Posterior vena cava (tissue), 2 donors: ENCODE measurements at regions of chr12 and their contacts with region 1.

Region 1: DNA sequence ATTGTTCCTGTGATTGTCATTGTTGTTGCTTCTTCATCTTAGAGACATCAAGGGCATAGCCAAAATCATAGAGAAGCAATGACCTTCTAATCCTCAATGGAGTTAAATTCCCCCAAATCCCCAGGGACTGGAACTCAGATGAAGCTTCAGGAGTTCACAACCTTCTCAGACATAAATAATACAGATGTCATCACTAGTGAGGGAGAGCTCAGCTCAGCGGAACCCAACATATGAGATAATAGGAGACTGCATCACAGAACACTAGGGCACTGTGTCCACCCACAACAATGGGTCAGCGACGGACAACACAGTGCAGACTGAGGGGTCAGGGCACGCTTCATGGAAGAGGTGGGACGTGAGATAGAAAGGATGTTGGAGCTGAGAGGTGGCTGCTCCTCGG is 1290.4 kb upstream of the TMEM132C start:
- DNase-seq: no peak

Region 2: DNA sequence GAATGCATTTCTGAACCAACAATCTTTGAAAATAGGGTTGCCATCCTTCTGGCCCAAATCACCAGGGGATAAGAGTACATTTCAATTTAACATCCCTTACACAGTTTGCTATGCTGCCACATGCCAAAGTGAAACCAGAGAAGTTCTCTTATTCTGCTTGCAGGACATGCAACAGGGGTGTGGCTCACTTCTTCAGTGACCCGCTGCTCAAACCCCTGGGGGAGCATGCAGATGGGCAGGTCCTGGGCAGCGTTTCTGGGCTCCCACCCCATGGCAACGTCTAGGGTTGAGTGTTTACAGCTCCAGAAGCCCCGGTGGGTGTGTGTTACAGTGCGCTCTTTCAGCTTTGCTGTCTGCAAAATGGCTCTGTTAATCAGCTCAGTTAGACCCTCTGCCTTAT is 15.9 kb before region 1 on chr12:
- intact Hi-C with region 1: no loop called
- DNase-seq: no peak

Region 3: DNA sequence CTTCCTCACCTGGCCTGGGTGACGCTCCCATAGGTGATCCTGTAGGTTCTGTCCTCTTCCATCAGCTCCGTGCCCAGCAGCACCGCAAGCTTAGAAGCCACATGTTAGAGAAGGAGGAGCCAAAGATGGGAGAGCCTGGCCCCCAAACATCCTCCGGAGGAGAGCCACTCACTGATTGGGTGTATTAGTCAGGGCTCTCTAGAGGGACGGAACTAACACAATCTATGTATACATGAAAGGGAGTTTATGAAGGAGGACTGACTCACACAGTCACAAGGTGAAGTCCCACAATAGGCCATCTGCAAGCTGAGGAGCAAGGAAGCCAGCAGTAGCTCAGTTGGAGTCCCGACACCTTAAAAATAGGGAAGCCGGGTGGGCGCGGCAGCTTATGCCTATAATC is 17.3 kb after region 1 on chr12:
- intact Hi-C with region 1: loop called in 1 of 2 experiments (anchors 1 kb)
- DNase-seq: no peak